ENCODE measurements at regions of chr15 and their contacts with region 1.

Region 1: GRCh38 chr15:43903864-43904290 is 77.1 kb downstream of the WDR76 start:
- DNase-seq: peak in 3 of 5 donors; percentile 33 to 37 (median 37)
- ATAC-seq: peak; percentile 74 to 85 (median 79)
- H3K4me3 ChIP-seq: no peak overlapping the region
- H3K27ac ChIP-seq: no peak overlapping the region
- H3K4me1 ChIP-seq: peaks cover 0 to 18% (median 2%) of the 10 kb centered on the region in 12 donors
- H3K27me3 ChIP-seq: no peaks in the 10 kb centered on the region
- CTCF ChIP-seq: peak; percentile 63 to 90 (median 79)
- POLR2A ChIP-seq: no peak

Region 2: GRCh38 chr15:43867096-43867495 is 36.8 kb before region 1 on chr15:
- intact Hi-C with region 1: no loop called
- DNase-seq: no peak
- ATAC-seq: no peak
- H3K4me3 ChIP-seq: no peak overlapping the region
- H3K27ac ChIP-seq: no peak overlapping the region
- H3K4me1 ChIP-seq: peaks cover 0 to 8% (median 2%) of the 10 kb centered on the region in 12 donors
- H3K27me3 ChIP-seq: no peaks in the 10 kb centered on the region
- CTCF ChIP-seq: no peak
- POLR2A ChIP-seq: no peak

Region 3: DNA sequence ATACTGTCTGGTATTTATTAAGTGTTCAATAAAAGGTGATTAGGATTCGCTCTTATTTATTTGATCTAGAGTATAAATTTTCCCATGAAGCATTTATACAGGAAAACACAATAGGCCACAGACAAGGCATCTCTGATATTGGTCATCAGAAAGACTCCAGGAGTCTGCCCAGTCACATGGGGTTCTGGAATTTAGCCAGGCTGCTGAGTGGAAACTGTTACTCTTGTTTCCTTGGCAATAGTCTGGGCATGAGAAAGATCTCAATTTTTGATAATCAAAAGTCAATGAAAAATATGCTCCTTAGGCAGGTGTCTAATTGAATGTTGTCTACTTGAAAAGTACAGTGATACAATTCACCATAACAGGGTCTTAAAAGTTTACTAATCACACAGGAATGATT is 130.0 kb after region 1 on chr15:
- intact Hi-C with region 1: loop called in 2 of 10 experiments (anchors 10 kb)
- DNase-seq: no peak
- ATAC-seq: no peak
- H3K4me3 ChIP-seq: no peak overlapping the region
- H3K27ac ChIP-seq: no peak overlapping the region
- H3K4me1 ChIP-seq: peaks cover 0 to 36% (median 3%) of the 10 kb centered on the region in 12 donors
- H3K27me3 ChIP-seq: no peaks in the 10 kb centered on the region
- CTCF ChIP-seq: no peak
- POLR2A ChIP-seq: no peak

Region 4: DNA sequence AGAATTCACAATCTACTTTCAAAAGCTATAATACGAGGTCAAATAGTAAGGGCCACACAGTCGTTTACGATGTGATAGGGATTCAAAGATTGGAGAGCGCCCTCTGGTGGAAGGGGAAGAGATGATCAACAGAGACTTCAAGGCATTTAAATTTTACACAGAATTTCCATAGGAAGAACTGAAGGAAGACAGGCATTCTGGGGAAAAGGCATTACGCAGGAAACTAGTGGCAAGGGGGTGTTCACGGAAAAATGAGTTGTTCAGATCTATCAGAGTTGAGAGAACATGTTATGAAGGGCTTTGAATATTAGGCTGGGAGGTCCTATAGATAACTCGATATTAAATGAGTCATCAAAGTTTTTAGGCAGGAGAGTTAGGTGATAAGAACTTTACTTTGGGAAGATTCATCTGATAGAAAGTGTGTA is 162.5 kb after region 1 on chr15:
- intact Hi-C with region 1: loop called (anchors 1 to 5 kb)
- DNase-seq: peak in 4 of 5 donors; percentile 31 to 42 (median 36)
- ATAC-seq: peak in 2 of 4 donors; percentile 50 to 59
- H3K4me3 ChIP-seq: no peak overlapping the region
- H3K27ac ChIP-seq: no peak overlapping the region
- H3K4me1 ChIP-seq: no peaks in the 10 kb centered on the region
- H3K27me3 ChIP-seq: peaks cover 0 to 3% (median 0%) of the 10 kb centered on the region in 9 donors
- CTCF ChIP-seq: peak; percentile 54 to 77 (median 68)
- POLR2A ChIP-seq: no peak

Region 5: GRCh38 chr15:44215594-44215993 is 311.7 kb after region 1 on chr15:
- intact Hi-C with region 1: loop called (anchors 2 to 10 kb)
- DNase-seq: no peak
- ATAC-seq: no peak
- H3K4me3 ChIP-seq: no peak overlapping the region
- H3K27ac ChIP-seq: no peak overlapping the region
- H3K4me1 ChIP-seq: no peaks in the 10 kb centered on the region
- H3K27me3 ChIP-seq: peaks cover 0 to 16% (median 0%) of the 10 kb centered on the region in 9 donors
- CTCF ChIP-seq: no peak
- POLR2A ChIP-seq: no peak

Region 6: GRCh38 chr15:44222478-44222877 is 318.6 kb after region 1 on chr15:
- intact Hi-C with region 1: loop called (anchors 2 to 10 kb)
- DNase-seq: no peak
- ATAC-seq: no peak
- H3K4me3 ChIP-seq: no peak overlapping the region
- H3K27ac ChIP-seq: no peak overlapping the region
- H3K4me1 ChIP-seq: no peaks in the 10 kb centered on the region
- H3K27me3 ChIP-seq: no peaks in the 10 kb centered on the region
- CTCF ChIP-seq: no peak
- POLR2A ChIP-seq: no peak

Measured in heart left ventricle (tissue), 16 donors.